ENCODE measurements at regions of chr4 and their contacts with region 1.

Region 1: GRCh38 chr4:163332500-163333406 is at the start of gene NPY1R:
- DNase-seq: peak; percentile 80
- H3K4me3 ChIP-seq: peak within 1 kb of the TSS in 2 of 3 experiments; percentile 39 to 42
- H3K27ac ChIP-seq: no peak within 1 kb of the TSS
- H3K4me1 ChIP-seq: peaks cover 6% of the 10 kb centered on the region
- H3K27me3 ChIP-seq: peaks cover 21 to 29% of the 10 kb centered on the region in 2 experiments
- CTCF ChIP-seq: peak; percentile 68 to 81
- POLR2A ChIP-seq: no peak
- total RNA-seq, gene NPY1R: not detected in 2 replicates

Region 2: DNA sequence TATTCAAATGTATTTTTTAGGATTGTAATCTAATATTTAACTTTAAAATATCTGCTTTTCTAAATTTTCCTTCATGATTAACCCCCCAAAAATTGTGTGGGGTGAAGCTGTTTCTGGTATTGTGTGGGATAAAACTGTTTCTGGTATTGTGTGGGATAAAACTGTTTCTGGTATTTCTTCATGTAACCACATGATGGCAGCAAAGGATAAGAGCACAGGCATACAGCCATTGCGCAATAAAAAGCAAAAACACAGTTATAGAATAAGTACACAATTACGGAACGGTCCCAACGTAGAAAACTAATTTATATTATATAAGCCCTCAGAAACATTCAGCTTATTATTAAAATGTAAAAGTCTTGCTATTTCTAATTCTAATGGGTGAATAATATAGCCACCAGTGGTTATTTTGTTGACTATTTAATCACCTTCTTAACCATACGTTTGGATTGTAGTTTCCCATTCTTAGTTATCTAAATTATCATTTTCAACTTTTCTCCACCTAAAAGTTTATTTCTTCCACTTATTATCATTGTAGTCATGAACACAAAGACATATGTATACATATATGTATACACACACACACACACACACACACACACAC is 835.1 kb before region 1 on chr4:
- CTCF ChIA-PET with region 1: interaction called, 69 read pairs
- POLR2A ChIA-PET with region 1: no interaction called
- dilution Hi-C with region 1: no loop called
- intact Hi-C with region 1: no loop called
- DNase-seq: peak; percentile 24
- H3K4me3 ChIP-seq: no peak overlapping the region
- H3K27ac ChIP-seq: no peak overlapping the region
- H3K4me1 ChIP-seq: no peaks in the 10 kb centered on the region
- H3K27me3 ChIP-seq: no peaks in the 10 kb centered on the region
- CTCF ChIP-seq: peak; percentile 30 to 44
- POLR2A ChIP-seq: no peak

Region 3: DNA sequence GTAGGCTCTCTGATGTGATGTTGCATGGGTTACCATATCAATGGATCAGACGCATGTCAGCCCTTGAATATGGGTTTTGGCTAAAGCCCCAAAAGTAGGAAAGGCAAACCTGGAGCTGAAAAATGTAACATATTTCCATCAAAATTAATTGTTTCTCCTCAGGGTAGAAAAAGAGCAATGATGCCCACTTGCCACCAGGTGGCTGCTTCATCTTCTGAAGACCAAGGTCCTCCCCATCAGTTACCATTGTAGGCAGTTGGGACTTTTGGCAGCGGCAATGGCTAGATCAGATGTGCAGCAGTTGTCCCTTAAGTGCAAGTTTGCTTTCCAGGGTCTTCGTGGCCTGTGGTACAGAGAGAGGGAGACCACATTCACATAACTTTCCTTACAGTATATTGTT is 284.3 kb before region 1 on chr4:
- CTCF ChIA-PET with region 1: interaction called, 28 read pairs
- POLR2A ChIA-PET with region 1: no interaction called
- dilution Hi-C with region 1: no loop called
- intact Hi-C with region 1: loop called (anchors 1 kb)
- DNase-seq: peak; percentile 8
- H3K4me3 ChIP-seq: no peak overlapping the region
- H3K27ac ChIP-seq: no peak overlapping the region
- H3K4me1 ChIP-seq: no peaks in the 10 kb centered on the region
- H3K27me3 ChIP-seq: no peaks in the 10 kb centered on the region
- CTCF ChIP-seq: peak; percentile 14 to 41
- POLR2A ChIP-seq: no peak

Region 4: GRCh38 chr4:163107754-163108153 is 225.0 kb before region 1 on chr4:
- CTCF ChIA-PET with region 1: interaction called, 108 read pairs
- POLR2A ChIA-PET with region 1: no interaction called
- dilution Hi-C with region 1: no loop called
- intact Hi-C with region 1: loop called (anchors 1 kb)
- DNase-seq: peak; percentile 63
- H3K4me3 ChIP-seq: no peak overlapping the region
- H3K27ac ChIP-seq: no peak overlapping the region
- H3K4me1 ChIP-seq: no peaks in the 10 kb centered on the region
- H3K27me3 ChIP-seq: no peaks in the 10 kb centered on the region
- CTCF ChIP-seq: peak in 1 of 2 donors; percentile 1
- POLR2A ChIP-seq: no peak

Region 5: DNA sequence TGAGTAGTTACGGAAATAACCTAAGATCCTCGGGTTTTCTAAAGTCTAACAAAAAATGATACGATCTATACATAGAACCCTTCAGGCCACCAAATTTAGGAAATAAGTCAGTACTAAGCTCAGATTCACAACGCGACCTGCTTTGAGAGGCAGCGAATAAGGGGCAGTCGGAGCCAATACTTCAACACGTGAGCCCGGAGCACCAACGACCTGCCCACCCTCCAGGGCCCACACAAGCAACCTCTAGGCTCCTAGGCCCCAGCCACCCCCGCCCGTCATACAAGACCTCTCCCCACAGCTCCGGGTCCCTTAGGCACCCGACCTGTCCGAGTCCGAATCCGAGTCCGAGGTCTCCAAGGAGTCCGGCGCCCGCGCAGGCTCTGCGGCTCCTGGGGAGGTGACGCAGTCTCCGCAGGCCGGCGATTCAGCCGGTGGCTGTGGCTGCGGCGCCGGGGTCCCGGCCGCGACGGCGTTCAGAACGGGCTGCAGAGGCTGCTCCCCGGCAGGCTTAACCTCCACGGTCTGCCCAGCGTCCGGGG is 166.6 kb before region 1 on chr4:
- CTCF ChIA-PET with region 1: interaction called, 6 read pairs
- POLR2A ChIA-PET with region 1: no interaction called
- dilution Hi-C with region 1: no loop called
- intact Hi-C with region 1: loop called (anchors 2 kb)
- DNase-seq: peak; percentile 73
- H3K4me3 ChIP-seq: peak overlapping the region; percentile 97
- H3K27ac ChIP-seq: peak overlapping the region; percentile 83
- H3K4me1 ChIP-seq: peaks cover 28% of the 10 kb centered on the region
- H3K27me3 ChIP-seq: no peaks in the 10 kb centered on the region
- CTCF ChIP-seq: no peak
- POLR2A ChIP-seq: no peak

Region 6: DNA sequence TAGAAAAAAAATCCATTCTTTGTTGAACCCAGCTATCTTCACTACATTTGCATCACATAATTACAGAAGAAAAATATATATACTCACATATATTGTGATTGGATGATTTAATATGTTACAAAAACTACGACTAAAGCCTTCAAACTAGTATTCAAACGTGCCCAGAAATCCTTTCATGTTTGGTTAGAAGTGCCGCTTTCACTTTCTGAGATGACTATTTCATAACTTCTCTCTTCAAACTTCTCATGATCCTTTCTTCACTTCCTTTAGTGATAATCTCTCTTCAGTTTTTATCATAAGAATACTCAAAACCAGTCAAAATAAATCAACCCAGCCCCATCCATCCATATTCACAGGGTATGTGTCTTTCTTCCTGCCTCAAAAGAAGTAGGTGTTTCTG is 115.2 kb before region 1 on chr4:
- CTCF ChIA-PET with region 1: no interaction called
- POLR2A ChIA-PET with region 1: no interaction called
- dilution Hi-C with region 1: no loop called
- intact Hi-C with region 1: no loop called
- DNase-seq: no peak
- H3K4me3 ChIP-seq: no peak overlapping the region
- H3K27ac ChIP-seq: no peak overlapping the region
- H3K4me1 ChIP-seq: no peaks in the 10 kb centered on the region
- H3K27me3 ChIP-seq: no peaks in the 10 kb centered on the region
- CTCF ChIP-seq: no peak
- POLR2A ChIP-seq: no peak

Region 7: DNA sequence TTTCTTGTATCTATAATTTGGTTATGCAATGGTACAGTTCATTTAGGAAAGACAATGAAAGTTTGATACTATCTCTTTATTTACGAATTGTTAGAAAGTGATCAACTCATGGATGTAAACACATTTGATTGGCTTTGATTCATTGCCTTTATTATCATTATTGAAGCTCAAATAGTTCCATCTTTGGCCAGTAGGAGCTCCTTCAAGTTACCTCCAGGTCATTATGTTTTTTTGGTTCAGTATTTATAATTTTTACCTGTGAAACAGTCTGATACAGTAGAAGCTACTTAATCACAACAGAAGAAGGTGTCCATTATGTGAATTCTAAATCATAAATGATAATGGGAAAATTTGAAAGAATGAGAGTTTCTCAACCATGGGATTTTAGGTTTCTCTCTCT is 23.4 kb after region 1 on chr4:
- CTCF ChIA-PET with region 1: no interaction called
- POLR2A ChIA-PET with region 1: no interaction called
- dilution Hi-C with region 1: no loop called
- intact Hi-C with region 1: no loop called
- DNase-seq: no peak
- H3K4me3 ChIP-seq: no peak overlapping the region
- H3K27ac ChIP-seq: no peak overlapping the region
- H3K4me1 ChIP-seq: no peaks in the 10 kb centered on the region
- H3K27me3 ChIP-seq: peaks cover 0 to 2% of the 10 kb centered on the region in 2 experiments
- CTCF ChIP-seq: no peak
- POLR2A ChIP-seq: no peak